Caco-2 (cell line): ENCODE measurements at regions of chr6 and their contacts with region 1.

Region 1: DNA sequence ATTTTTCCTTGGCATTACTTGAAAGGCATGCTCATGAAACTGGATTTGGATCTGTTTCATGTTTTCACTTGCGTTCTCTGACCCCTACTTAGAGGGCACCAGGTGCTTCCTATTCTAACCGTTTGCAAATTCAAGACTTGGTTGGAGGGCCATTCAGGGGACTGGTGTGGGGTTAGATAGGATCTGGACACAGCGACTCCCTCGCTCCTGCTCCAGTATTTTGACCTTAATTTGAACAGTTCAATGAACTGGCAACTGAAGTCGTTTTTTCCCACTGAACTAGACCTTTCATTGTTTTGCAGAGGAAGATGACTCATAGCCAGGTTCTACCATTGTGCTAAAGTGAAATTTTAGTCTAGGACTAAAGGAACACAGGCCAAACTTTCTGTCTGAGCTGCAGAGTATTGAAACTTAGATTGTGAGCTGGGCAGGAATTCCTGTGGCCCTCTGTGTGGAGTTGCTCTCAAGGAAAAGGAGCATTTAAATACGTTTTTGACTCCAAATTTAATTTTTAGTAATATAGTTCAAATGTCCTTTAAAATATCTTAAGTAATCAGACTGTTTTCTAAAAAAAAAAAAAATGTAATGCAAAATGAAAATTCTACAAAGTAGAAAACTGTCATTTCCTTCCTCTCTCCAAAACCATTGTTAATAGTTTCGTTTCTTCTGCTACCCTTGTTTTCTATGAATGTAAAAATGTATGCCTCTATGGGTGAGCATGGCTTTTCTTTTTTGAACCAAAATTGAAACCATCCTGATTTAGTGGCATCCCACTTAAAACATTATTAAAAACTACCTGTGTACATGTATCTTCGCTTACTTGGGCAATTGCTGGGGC is 64.8 kb downstream of the UTRN start:
- DNase-seq: no peak
- H3K4me3 ChIP-seq: no peak overlapping the region
- H3K4me3 Mint-ChIP-seq: no peak overlapping the region
- H3K27ac Mint-ChIP-seq: no peak overlapping the region
- H3K4me1 ChIP-seq: peaks cover 6% of the 10 kb centered on the region; the same call in 1 of the 2 replicates
- H3K4me1 Mint-ChIP-seq: peaks cover 18% of the 10 kb centered on the region
- H3K27me3 ChIP-seq: no peaks in the 10 kb centered on the region
- H3K27me3 Mint-ChIP-seq: no peaks in the 10 kb centered on the region
- CTCF ChIP-seq: no peak

Region 2: GRCh38 chr6:144232176-144232831 is 117.6 kb before region 1 on chr6:
- CTCF ChIA-PET with region 1: no interaction called
- POLR2A ChIA-PET with region 1: no interaction called
- intact Hi-C with region 1: loop called (anchors 5 kb)
- DNase-seq: no peak
- H3K4me3 ChIP-seq: no peak overlapping the region
- H3K4me3 Mint-ChIP-seq: no peak overlapping the region
- H3K27ac Mint-ChIP-seq: no peak overlapping the region
- H3K4me1 ChIP-seq: no peaks in the 10 kb centered on the region; the same call in none of the 2 replicates
- H3K4me1 Mint-ChIP-seq: peaks cover 7% of the 10 kb centered on the region
- H3K27me3 ChIP-seq: no peaks in the 10 kb centered on the region
- H3K27me3 Mint-ChIP-seq: no peaks in the 10 kb centered on the region
- CTCF ChIP-seq: no peak

Region 3: GRCh38 chr6:144439016-144439415 is 89.1 kb after region 1 on chr6:
- CTCF ChIA-PET with region 1: no interaction called
- POLR2A ChIA-PET with region 1: no interaction called
- intact Hi-C with region 1: no loop called
- DNase-seq: no peak
- H3K4me3 ChIP-seq: no peak overlapping the region
- H3K4me3 Mint-ChIP-seq: no peak overlapping the region
- H3K27ac Mint-ChIP-seq: no peak overlapping the region
- H3K4me1 ChIP-seq: no peaks in the 10 kb centered on the region
- H3K4me1 Mint-ChIP-seq: peaks cover 6% of the 10 kb centered on the region
- H3K27me3 ChIP-seq: no peaks in the 10 kb centered on the region
- H3K27me3 Mint-ChIP-seq: no peaks in the 10 kb centered on the region
- CTCF ChIP-seq: no peak